Ovary (tissue), 10 donors: ENCODE measurements at regions of chr11 and their contacts with region 1.

Region 1: GRCh38 chr11:111982019-111982464 is 43.2 kb upstream of the DLAT start:
- DNase-seq: peak in 3 of 5 donors; percentile 31 to 52 (median 49)
- H3K4me3 ChIP-seq: no peak overlapping the region
- H3K27ac ChIP-seq: no peak overlapping the region
- H3K4me1 ChIP-seq: no peaks in the 10 kb centered on the region
- H3K27me3 ChIP-seq: no peaks in the 10 kb centered on the region
- CTCF ChIP-seq: peak in 1 of 3 donors; percentile 19
- EP300 ChIP-seq: no peak
- POLR2A ChIP-seq: no peak

Region 2: DNA sequence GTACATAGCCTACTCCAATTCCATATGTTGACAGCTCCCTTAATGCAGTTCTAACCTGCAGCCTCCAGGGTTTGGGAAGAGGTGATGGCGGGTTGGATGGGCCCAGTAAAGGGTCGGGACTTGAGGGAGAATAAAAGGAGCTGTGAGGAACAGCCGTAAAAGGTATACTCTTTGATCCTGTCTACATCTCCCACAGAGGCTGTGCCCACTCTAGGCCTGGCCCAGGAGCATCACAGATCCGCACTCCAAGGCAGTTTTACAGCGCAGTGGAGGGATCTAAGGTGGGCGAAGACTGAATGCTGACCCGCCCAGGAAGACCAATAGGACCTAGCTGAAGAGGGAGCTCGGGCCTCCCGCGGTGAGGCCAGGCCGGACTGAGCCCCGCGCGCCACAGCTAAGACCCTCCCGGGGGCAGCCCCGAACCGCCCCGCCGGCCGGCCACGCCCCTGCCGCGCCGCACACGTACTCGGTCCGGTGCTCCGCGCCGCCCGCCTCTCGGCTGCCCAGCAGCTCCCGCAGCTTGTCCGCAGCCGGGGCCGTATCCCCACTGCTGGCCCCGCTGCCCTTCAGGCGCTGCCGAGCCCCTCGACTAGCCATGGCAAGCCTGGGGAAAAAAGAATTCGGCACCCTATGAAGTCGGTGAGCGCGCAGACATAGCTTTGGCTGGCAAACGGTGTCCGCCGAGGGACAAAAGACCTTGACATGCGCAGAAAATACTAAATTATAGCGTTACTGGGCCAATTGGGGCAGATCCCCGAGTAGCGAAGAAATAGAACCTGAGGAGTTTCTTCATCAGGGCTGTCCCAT is 111.0 kb before region 1 on chr11 and contains the start of gene ALG9:
- intact Hi-C with region 1: loop called in 3 of 4 experiments (anchors 5 to 10 kb)
- DNase-seq: peak; percentile 86 to 93 (median 89)
- H3K4me3 ChIP-seq: peak within 1 kb of the TSS; percentile 94
- H3K27ac ChIP-seq: peak within 1 kb of the TSS; percentile 47 to 85
- H3K4me1 ChIP-seq: peaks cover 3% of the 10 kb centered on the region
- H3K27me3 ChIP-seq: no peaks in the 10 kb centered on the region
- CTCF ChIP-seq: no peak
- EP300 ChIP-seq: no peak
- POLR2A ChIP-seq: no peak
- total RNA-seq, gene ALG9: 24.4 to 39.9 (median 29.3) TPM

Region 3: GRCh38 chr11:111938687-111939160 is 43.3 kb before region 1 on chr11:
- intact Hi-C with region 1: loop called (anchors 2 to 5 kb)
- DNase-seq: no peak
- H3K4me3 ChIP-seq: no peak overlapping the region
- H3K27ac ChIP-seq: peak overlapping the region in 1 of 2 donors; percentile 58
- H3K4me1 ChIP-seq: peaks cover 3% of the 10 kb centered on the region
- H3K27me3 ChIP-seq: no peaks in the 10 kb centered on the region
- CTCF ChIP-seq: no peak
- EP300 ChIP-seq: no peak
- POLR2A ChIP-seq: no peak

Region 4: DNA sequence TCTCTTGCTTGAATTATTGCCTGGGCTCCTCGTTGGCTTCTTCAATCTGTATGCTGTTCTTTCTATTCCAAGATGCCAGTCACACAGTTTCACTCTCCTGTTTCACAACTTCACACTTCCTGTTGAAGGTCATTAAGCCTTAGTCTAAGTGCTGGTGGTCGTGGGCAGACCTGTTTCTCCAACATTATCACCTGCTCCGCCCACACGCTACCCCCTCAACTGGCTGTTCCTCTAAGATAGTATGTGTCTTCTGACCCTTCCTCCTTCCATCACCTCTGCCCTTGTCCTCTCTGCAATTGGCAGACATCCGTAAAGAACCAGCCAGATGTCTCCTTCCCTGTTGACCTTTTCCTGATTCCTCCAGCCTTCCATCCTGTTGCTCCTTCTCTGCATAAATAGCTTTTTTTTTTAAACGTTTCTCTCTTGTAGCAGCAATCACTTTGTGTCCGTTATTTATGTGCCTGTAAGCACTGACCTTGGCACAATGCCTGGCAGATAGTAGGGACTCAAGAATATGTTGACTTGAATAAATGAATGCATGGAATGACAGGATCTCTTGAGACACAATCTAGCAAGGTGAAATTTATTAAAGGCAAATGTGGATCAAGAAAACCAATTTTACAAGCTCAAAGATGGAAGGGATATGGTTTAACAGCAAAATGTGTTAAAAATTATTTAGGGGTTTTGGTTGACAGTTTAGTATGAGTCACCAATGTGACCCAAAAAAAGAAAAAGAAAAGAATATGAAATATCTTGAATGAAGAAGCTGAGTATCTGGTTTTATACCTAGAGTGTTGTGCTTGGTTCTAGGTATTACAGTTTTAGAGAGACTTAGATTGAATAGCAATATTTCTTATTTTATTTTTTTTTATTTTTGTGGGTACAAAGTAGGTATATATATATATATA is 32.3 kb before region 1 on chr11:
- intact Hi-C with region 1: no loop called
- DNase-seq: no peak
- H3K4me3 ChIP-seq: no peak overlapping the region
- H3K27ac ChIP-seq: no peak overlapping the region
- H3K4me1 ChIP-seq: peaks cover 8% of the 10 kb centered on the region
- H3K27me3 ChIP-seq: no peaks in the 10 kb centered on the region
- CTCF ChIP-seq: no peak
- EP300 ChIP-seq: no peak
- POLR2A ChIP-seq: no peak